IMR-90 (cell line): ENCODE measurements at regions of chrX and their contacts with region 1.

Region 1: DNA sequence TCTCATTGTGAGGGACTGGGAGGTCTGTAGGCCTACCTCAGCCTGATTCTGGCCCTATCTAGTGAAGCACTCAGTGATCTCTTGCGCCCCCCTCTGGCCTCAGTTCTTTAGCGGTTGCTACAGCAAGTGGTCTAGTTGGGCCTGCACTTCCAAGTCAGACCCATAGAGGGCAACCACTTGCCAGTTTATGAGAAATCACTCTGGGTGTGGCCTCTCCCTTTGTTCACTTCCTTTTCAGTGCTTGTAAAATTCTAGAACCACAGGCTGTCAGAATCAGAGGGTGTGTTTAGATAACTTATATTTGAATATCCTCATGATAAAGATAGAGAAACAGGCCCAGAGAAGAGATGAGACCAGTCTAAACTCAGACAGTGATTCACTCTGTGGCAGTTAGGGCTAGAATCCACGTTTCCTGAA is 60.9 kb upstream of the LAS1L start:
- DNase-seq: peak; percentile 93
- ATAC-seq: peak; percentile 97
- H3K4me3 ChIP-seq: no peak overlapping the region
- H3K27ac ChIP-seq: peak overlapping the region; percentile 30; the same call in 1 of the 2 replicates
- H3K4me1 ChIP-seq: no peaks in the 10 kb centered on the region
- H3K27me3 ChIP-seq: no peaks in the 10 kb centered on the region; the same call in 1 of the 2 replicates
- CTCF ChIP-seq: peak; percentile 100
- POLR2A ChIP-seq: no peak
- RAD21 ChIP-seq: peak; percentile 83

Region 2: DNA sequence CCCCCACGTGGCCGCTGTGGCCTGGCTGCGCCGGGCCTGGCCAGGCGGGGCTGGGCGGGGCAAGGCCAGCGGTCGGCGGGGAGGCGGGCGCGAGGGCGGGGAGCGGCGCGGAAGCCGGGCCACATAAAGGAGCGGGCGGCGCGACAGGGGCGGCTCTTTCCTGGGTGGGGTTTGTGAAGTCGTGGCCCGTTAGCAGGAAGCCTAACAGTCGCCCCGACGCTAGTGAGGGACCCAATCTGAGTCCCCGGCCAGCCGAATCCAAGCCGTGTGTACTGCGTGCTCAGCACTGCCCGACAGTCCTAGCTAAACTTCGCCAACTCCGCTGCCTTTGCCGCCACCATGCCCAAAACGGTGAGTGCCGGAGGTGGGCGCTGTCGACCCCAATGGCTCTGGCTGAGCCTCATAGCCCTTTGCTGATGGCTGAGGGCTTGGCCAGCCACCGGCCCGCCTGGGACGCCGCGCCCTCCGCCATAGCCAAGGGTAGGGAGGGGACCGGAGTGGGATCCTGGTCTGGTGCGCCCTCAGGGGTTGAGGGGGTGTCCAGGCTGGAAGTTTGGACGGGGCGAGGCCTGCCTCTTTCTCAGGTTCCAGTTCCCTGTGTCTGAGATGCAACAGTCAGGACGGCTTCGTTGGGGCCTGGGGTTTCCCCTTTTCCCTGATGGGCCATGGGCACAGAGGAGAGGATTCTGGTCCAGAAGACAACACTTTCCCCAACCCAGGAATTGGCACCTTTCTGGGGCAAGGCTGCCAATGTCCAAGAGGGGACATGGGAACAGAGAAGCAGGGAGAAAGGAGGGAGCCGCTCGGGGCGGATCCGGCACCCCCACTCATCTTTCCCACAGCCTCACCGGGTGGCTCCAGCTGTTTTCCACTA is 72.3 kb after region 1 on chrX and contains the start of gene MSN:
- CTCF ChIA-PET with region 1: interaction called, 3 read pairs
- POLR2A ChIA-PET with region 1: interaction called, 8 read pairs
- dilution Hi-C with region 1: no loop called
- in situ Hi-C with region 1: no loop called
- intact Hi-C with region 1: loop called (anchors 1 kb)
- DNase-seq: peak; percentile 35
- ATAC-seq: peak; percentile 86
- H3K4me3 ChIP-seq: peak within 1 kb of the TSS; percentile 99
- H3K27ac ChIP-seq: peak within 1 kb of the TSS; percentile 99
- H3K4me1 ChIP-seq: no peaks in the 10 kb centered on the region; the same call in 1 of the 2 replicates
- H3K27me3 ChIP-seq: no peaks in the 10 kb centered on the region
- CTCF ChIP-seq: no peak; the same call in none of the 2 replicates
- POLR2A ChIP-seq: peak; percentile 80
- RAD21 ChIP-seq: peak; percentile 21; the same call in 1 of the 2 replicates
- total RNA-seq, gene MSN: 580 and 619 TPM in 2 replicates

Region 3: DNA sequence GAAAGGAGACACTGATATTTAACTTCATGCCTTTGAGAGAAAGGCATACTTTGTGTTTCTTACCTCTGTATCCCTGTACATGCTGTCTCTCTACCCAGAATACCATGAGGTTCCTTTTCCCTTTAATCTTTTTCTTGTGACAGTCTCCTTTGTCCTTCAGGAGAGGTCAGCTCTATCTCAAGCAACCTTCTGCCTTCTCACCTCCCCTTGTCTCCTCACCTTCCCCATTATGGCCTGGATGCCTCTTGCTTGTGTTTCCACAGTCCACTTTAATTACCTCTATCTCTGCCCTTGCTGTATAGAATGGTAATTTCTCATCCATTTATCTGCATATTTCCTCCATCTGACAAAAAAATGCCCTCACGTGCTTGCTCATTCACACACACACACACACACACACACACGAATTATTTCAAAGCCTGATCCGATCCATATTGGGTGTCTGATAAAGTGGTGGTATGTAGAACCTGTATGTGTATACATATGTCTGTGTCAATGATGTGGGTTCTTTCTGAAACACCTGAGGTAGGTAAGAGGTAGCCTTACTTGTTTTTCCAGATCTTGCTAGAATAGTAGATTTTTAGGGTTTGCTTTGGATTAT is 100.5 kb after region 1 on chrX:
- CTCF ChIA-PET with region 1: no interaction called
- POLR2A ChIA-PET with region 1: no interaction called
- dilution Hi-C with region 1: no loop called
- in situ Hi-C with region 1: no loop called
- intact Hi-C with region 1: no loop called
- DNase-seq: no peak
- ATAC-seq: no peak
- H3K4me3 ChIP-seq: no peak overlapping the region
- H3K27ac ChIP-seq: no peak overlapping the region; the same call in 1 of the 2 replicates
- H3K4me1 ChIP-seq: peaks cover 16% of the 10 kb centered on the region
- H3K27me3 ChIP-seq: no peaks in the 10 kb centered on the region
- CTCF ChIP-seq: no peak
- POLR2A ChIP-seq: no peak
- RAD21 ChIP-seq: no peak

Region 4: GRCh38 chrX:65706041-65706828 is 110.8 kb after region 1 on chrX:
- CTCF ChIA-PET with region 1: interaction called, 4 read pairs
- POLR2A ChIA-PET with region 1: no interaction called
- dilution Hi-C with region 1: no loop called
- in situ Hi-C with region 1: no loop called
- intact Hi-C with region 1: loop called (anchors 2 kb)
- DNase-seq: peak; percentile 85
- ATAC-seq: peak; percentile 73
- H3K4me3 ChIP-seq: no peak overlapping the region
- H3K27ac ChIP-seq: peak overlapping the region; percentile 52
- H3K4me1 ChIP-seq: peaks cover 21% of the 10 kb centered on the region
- H3K27me3 ChIP-seq: no peaks in the 10 kb centered on the region
- CTCF ChIP-seq: no peak
- POLR2A ChIP-seq: no peak
- RAD21 ChIP-seq: no peak

Region 5: DNA sequence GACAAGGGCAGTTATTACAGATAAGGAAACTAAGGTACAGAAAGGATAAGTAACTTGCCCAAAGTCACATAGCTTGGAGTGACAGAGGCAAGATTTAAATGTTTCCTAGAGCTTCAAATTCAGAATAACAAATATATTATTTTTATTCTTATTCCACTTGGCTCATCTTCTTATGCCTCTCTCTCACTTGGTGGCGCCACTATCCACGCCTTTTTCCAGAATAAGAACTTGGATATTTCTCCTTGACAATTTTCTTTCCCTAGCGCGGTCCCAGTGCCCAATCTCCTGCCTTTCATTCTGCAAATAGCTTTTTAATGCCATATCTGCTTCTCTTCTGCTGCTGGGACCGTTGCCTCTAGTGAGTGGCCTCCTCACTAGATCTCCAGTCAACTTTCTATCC is 150.5 kb after region 1 on chrX:
- CTCF ChIA-PET with region 1: no interaction called
- POLR2A ChIA-PET with region 1: no interaction called
- dilution Hi-C with region 1: no loop called
- in situ Hi-C with region 1: no loop called
- intact Hi-C with region 1: loop called (anchors 2 kb)
- DNase-seq: no peak
- ATAC-seq: no peak
- H3K4me3 ChIP-seq: no peak overlapping the region
- H3K27ac ChIP-seq: no peak overlapping the region
- H3K4me1 ChIP-seq: no peaks in the 10 kb centered on the region
- H3K27me3 ChIP-seq: peaks cover 2% of the 10 kb centered on the region; the same call in 1 of the 2 replicates
- CTCF ChIP-seq: peak; percentile 12; the same call in 1 of the 2 replicates
- POLR2A ChIP-seq: no peak
- RAD21 ChIP-seq: 0 out of 2 replicates have a peak, but pooled peaks have one; percentile 8

Region 6: GRCh38 chrX:65841263-65841662 is 245.8 kb after region 1 on chrX:
- CTCF ChIA-PET with region 1: no interaction called
- POLR2A ChIA-PET with region 1: no interaction called
- dilution Hi-C with region 1: no loop called
- in situ Hi-C with region 1: no loop called
- intact Hi-C with region 1: no loop called
- DNase-seq: no peak
- ATAC-seq: no peak
- H3K4me3 ChIP-seq: no peak overlapping the region
- H3K27ac ChIP-seq: no peak overlapping the region
- H3K4me1 ChIP-seq: no peaks in the 10 kb centered on the region
- H3K27me3 ChIP-seq: peaks cover 4% of the 10 kb centered on the region
- CTCF ChIP-seq: no peak
- POLR2A ChIP-seq: no peak
- RAD21 ChIP-seq: no peak